ENCODE measurements at regions of chr1 and their contacts with region 1.

Region 1: DNA sequence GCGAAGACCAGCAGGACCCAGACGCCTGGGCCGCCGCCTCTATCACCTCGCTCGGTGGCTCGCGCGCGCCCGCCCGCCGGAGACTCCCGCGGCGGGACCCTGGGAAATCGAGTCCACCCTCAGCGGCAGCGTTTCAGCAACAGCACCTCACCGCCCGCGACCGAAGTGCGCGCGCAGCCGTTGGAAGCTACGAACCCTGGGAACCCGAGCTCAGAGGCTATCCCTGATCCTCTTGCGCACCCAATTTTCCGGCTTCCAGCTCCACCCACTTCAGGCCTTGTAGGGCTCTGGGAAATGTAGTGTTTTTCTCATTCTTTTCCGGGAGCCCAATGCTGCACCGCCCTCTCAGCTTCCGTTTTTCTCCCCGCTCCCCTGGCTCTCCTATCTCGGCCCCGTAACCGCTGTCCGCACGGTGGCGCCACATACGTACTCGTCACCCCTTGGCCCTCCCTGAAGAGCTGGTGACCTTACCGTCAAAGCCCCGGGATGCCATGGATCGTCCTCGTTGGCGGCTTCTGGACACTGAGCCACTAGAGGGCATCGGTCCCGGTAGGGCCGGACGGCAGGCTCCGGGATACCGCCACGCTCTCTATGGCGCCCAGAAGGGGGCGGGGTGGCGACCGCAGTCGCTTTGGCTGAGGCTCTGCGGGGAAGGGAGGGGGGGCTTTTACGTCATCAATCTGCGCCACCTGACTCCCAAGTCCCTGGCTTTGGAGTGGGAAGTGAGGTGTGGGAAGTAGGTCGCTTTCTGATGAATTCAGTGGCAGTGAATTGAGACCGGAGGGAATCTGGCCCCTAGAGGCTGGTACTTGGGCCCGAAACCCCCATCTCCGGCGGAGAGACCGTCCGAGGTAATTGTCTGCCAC is at the starts of genes ODR4 and TPR:
- DNase-seq: peak; percentile 98
- ATAC-seq: peak; percentile 95
- H3K4me3 ChIP-seq: peak within 1 kb of the TSS; percentile 80 to 81 (median 80)
- H3K27ac ChIP-seq: peak within 1 kb of the TSS; percentile 99
- H3K4me1 ChIP-seq: peaks cover 47% of the 10 kb centered on the region
- H3K27me3 ChIP-seq: no peaks in the 10 kb centered on the region; a peak in 1 of 5 replicates
- CTCF ChIP-seq: peak; percentile 99
- EP300 ChIP-seq: no peak; a peak in 1 of 4 replicates
- POLR2A ChIP-seq: peak; percentile 87 to 89
- RAD21 ChIP-seq: peak; percentile 15; the same call in 1 of the 2 replicates
- total RNA-seq, gene ODR4: 14.7 and 22.0 TPM in 2 replicates
- total RNA-seq, gene TPR: 81.7 and 116 TPM in 2 replicates

Region 2: DNA sequence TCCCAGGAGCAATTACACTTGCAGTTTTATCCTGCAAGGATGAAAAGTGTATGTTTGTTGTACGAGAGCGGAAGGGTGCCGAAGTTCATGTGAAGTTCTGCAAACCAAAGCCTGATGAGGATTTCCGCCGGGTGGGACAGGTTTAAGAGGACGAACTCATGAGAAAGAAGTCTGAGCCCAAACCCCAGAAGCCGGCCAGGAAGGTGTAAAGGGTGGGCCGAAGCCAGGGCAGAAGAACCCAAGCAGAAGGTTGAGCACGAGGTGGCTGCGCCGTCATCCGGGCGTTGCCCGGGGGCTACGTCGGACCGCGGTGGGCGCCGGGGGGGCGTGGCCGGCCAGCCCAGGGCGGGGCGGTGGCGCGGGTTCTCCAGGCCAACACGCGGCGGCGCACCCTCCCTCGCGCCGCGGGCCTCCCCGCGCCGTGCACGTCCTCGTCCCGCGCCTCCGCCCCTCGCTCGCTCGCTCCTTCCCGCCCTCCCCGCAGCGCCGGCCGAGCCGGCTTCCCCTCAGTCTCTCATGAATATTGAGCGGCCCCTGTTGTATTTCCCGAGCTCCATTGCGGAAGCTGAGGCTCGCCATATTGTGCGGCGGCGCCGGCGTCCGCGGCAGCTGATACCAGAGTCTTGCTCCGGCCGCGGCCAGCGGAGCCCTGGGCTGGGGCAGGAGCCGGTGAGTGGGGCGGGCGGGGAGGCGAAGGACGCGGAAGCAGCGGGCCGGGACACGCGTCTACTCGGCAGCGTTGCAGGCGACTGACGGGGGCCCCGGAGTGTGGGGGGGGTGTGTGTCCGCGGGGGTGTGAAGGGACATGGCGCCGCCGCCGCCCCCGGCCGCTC is 1330.1 kb before region 1 on chr1 and contains the start of gene RNF2:
- CTCF ChIA-PET with region 1: no interaction called
- POLR2A ChIA-PET with region 1: no interaction called
- in situ Hi-C with region 1: no loop called
- intact Hi-C with region 1: loop called (anchors 10 kb)
- DNase-seq: peak; percentile 65
- ATAC-seq: peak; percentile 92
- H3K4me3 ChIP-seq: peak within 1 kb of the TSS; percentile 66 to 84 (median 83)
- H3K27ac ChIP-seq: peak within 1 kb of the TSS; percentile 88
- H3K4me1 ChIP-seq: peaks cover 56% of the 10 kb centered on the region
- H3K27me3 ChIP-seq: no peaks in the 10 kb centered on the region
- CTCF ChIP-seq: no peak; the same call in 1 of the 2 replicates
- EP300 ChIP-seq: no peak
- POLR2A ChIP-seq: peak in 1 of 2 experiments; percentile 56; a peak in 2 of 4 replicates
- RAD21 ChIP-seq: peak; percentile 23; the same call in 1 of the 2 replicates
- total RNA-seq, gene RNF2: 21.7 and 32.9 TPM in 2 replicates

Region 3: DNA sequence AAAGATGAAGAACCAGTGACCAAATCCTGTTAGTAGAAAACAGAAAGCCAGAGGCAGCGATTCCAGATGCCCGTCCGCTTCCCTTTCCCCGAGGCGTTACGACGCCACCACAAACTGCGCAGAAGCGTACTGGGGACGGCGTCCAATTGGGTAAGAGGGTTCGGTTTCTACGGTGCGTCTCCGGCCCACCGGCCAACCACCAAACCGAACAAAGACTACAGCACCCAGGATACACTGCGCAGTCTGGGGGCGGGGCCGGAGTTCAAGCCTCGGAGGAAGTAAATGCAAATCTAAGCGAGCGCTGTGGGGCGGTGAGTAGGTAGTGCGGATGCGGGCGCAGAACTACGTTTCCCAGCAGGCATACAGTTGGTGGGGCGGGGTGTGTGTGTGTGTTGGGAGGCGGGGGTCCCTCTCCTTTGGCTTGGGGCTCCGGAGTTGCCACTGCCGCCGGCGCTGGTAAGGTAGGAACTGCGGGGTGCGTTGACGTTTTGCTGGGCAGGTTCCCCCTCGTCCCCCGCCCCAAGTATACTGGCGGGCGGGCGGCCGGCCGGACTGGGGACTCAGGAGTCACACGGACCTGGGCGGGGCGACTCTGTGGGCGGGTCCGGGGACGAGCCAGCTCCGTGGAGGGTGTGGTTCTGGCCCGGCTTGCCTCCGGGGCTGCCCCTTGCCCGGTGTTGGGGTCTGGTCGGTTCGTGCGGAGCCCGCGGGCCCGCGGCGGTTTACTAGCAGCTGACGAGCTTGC is 1218.3 kb before region 1 on chr1 and contains the starts of genes SWT1 and TRMT1L:
- CTCF ChIA-PET with region 1: no interaction called
- POLR2A ChIA-PET with region 1: interaction called, 4 read pairs
- in situ Hi-C with region 1: no loop called
- intact Hi-C with region 1: loop called (anchors 2 kb)
- DNase-seq: peak; percentile 98
- ATAC-seq: peak; percentile 96
- H3K4me3 ChIP-seq: peak within 1 kb of the TSS; percentile 92 to 94 (median 93)
- H3K27ac ChIP-seq: peak within 1 kb of the TSS; percentile 91
- H3K4me1 ChIP-seq: peaks cover 26% of the 10 kb centered on the region
- H3K27me3 ChIP-seq: no peaks in the 10 kb centered on the region; a peak in 1 of 5 replicates
- CTCF ChIP-seq: no peak
- EP300 ChIP-seq: no peak
- POLR2A ChIP-seq: peak; percentile 88 to 95
- RAD21 ChIP-seq: no peak
- total RNA-seq, gene SWT1: 2.5 and 4.8 TPM in 2 replicates
- total RNA-seq, gene TRMT1L: 17.9 and 25.4 TPM in 2 replicates

Region 4: GRCh38 chr1:186212544-186213226 is 162.6 kb before region 1 on chr1:
- CTCF ChIA-PET with region 1: no interaction called
- POLR2A ChIA-PET with region 1: no interaction called
- in situ Hi-C with region 1: no loop called
- intact Hi-C with region 1: no loop called
- DNase-seq: peak; percentile 74
- ATAC-seq: peak; percentile 95
- H3K4me3 ChIP-seq: no peak overlapping the region
- H3K27ac ChIP-seq: no peak overlapping the region
- H3K4me1 ChIP-seq: no peaks in the 10 kb centered on the region
- H3K27me3 ChIP-seq: no peaks in the 10 kb centered on the region
- CTCF ChIP-seq: peak; percentile 92
- EP300 ChIP-seq: no peak
- POLR2A ChIP-seq: no peak
- RAD21 ChIP-seq: peak; percentile 86

Region 5: DNA sequence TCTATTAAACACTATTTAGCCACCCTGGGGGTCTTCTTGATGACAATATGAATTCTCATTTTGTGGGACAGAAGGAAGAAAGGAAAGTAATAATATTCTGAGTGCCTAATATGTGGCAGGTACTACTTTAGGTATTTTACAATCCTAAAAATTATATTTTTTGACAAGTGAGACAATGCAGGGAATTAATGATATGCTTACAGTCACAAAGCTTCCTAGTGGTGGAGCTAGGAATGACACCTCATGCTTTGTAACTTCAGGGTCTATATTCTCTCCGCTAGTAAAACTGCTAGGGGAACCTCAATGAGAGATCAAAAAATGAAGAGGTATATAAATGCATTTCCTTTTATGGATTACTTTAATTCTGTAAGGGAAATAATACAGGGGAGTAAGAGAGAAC is 44.6 kb before region 1 on chr1:
- CTCF ChIA-PET with region 1: no interaction called
- POLR2A ChIA-PET with region 1: interaction called, 3 read pairs
- in situ Hi-C with region 1: no loop called
- intact Hi-C with region 1: loop called (anchors 5 kb)
- DNase-seq: peak; percentile 6
- ATAC-seq: peak; percentile 49; the same call in 1 of the 3 replicates
- H3K4me3 ChIP-seq: no peak overlapping the region
- H3K27ac ChIP-seq: no peak overlapping the region
- H3K4me1 ChIP-seq: no peaks in the 10 kb centered on the region
- H3K27me3 ChIP-seq: no peaks in the 10 kb centered on the region
- CTCF ChIP-seq: no peak
- EP300 ChIP-seq: no peak
- POLR2A ChIP-seq: no peak
- RAD21 ChIP-seq: no peak

Measured in HepG2 (cell line).